Naive thymus-derived CD4-positive, alpha-beta T cell (primary cell): ENCODE measurements at regions of chr5 and their contacts with region 1.

Region 1: DNA sequence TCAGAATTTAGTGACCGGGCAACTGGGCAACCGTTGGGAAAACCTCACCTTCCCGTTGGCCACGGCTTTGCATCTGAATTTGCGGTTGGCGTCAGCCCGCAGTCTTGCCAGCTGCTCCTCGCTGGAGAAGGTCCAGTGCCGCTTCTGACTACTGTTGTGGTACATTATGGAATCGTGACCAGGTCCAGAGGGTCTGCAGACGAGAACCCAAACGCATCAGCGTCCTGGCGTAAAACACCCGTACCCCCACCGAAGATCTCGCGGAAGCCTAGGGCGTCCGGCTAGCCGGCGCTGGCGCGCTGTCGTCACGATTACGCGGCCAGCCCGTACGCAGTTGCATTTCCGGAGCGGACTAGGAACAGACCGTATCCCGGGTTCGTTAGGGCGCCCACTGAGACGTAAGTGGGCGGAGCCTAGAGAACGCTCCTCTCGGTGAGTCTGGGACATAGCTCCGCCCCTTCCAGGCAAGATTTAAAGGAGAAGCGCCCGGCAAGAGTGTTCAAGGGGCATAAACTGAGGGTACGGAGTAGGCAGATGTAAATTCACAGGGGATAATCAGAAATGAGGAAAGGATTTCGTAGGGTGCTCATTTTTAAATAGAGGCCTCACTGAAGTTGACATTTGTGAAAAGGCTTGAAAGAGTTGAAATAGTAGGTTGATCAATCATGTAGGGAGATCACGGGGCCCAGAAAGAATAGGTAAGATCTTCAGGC is at the start of gene CCNH:
- DNase-seq: peak; percentile 83 to 98 (median 97)
- ATAC-seq: peak; percentile 99
- H3K4me3 ChIP-seq: peak within 1 kb of the TSS; percentile 88
- H3K4me3 Mint-ChIP-seq: peak within 1 kb of the TSS; percentile 90 to 100 (median 95)
- H3K27ac ChIP-seq: peak within 1 kb of the TSS; percentile 99
- H3K27ac Mint-ChIP-seq: peak within 1 kb of the TSS; percentile 92 to 99 (median 98)
- H3K4me1 ChIP-seq: peaks cover 26 to 28% of the 10 kb centered on the region in 2 donors
- H3K4me1 Mint-ChIP-seq: peaks cover 24 to 62% (median 50%) of the 10 kb centered on the region in 7 donors
- H3K27me3 ChIP-seq: no peaks in the 10 kb centered on the region
- H3K27me3 Mint-ChIP-seq: peaks cover 0 to 3% (median 0%) of the 10 kb centered on the region in 5 donors
- total RNA-seq, gene CCNH: 57.5 to 239 (median 113) TPM

Region 2: DNA sequence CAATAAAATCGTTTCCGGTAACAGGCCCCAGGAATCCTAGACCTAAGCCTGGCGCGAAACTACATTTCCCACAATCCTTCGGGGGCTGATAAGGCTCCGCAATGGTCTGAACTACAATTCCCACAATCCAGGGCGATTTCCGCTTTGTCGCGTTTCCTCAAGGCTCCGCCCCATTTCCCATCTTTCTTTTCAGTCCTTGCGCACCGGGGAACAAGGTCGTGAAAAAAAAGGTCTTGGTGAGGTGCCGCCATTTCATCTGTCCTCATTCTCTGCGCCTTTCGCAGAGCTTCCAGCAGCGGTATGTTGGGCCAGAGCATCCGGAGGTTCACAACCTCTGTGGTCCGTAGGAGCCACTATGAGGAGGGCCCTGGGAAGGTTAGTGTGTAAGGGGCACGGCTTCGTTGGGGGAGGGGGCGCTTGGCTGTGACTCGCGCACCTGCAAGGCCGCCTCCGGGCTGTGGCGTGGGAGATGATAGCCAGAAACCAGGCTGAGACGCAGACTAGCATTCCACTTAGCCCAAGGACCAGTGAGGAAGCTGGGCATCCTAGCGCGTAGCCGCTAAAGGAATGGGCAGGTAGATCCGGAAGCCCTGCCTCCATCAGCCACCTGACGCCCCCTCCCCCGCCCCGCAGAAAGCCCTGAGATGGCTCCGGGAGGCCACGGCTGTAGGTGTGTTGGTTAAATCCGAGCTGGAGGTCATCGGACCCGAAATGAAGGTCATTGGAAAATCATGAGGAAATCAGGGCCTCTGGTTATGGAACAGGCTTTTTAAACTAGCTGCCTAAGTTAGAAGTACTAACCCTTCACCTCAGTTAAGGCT is 794.8 kb before region 1 on chr5 and contains the start of gene COX7C:
- CTCF ChIA-PET with region 1: no interaction called
- POLR2A ChIA-PET with region 1: interaction called, 8 read pairs
- intact Hi-C with region 1: loop called (anchors 1 kb)
- DNase-seq: peak; percentile 67 to 97 (median 96)
- ATAC-seq: peak; percentile 97
- H3K4me3 ChIP-seq: peak within 1 kb of the TSS; percentile 95
- H3K4me3 Mint-ChIP-seq: peak within 1 kb of the TSS; percentile 96 to 100 (median 100)
- H3K27ac ChIP-seq: peak within 1 kb of the TSS; percentile 96
- H3K27ac Mint-ChIP-seq: peak within 1 kb of the TSS; percentile 98 to 100 (median 100)
- H3K4me1 ChIP-seq: peaks cover 7 to 12% of the 10 kb centered on the region in 2 donors
- H3K4me1 Mint-ChIP-seq: peaks cover 5 to 46% (median 32%) of the 10 kb centered on the region in 7 donors
- H3K27me3 ChIP-seq: no peaks in the 10 kb centered on the region
- H3K27me3 Mint-ChIP-seq: peaks cover 8 to 14% (median 9%) of the 10 kb centered on the region in 5 donors
- total RNA-seq, gene COX7C: 393 to 571 (median 547) TPM

Region 3: DNA sequence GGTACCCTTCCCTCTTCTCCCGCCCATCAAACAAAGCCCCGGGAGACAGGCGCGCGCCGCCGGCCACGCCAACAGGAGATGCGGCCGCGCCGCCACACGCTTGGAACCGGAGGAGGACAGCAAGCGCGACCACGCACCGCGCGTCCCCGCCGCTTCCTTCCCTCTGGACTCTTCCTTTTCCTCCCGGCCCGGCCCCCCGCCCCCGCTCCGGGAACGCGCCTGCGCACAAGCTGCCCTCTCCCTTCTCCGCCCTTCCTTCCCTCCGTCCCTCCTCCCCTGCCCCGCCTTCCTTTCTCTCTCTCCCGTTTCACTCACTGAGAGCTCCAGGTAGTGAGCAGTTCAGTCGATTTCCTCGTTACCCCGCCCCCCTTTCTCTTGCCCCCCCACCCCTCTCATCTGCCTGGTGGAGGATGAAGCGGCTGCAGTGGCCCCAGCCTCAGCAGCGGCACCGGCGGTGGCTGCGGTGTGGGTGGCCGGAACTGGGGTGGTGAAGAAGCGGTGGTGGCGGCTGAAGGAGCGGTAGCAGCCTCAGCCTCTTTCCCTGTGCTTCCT is 145.1 kb before region 1 on chr5 and contains the start of gene RASA1:
- CTCF ChIA-PET with region 1: interaction called, 7 read pairs
- POLR2A ChIA-PET with region 1: interaction called, 8 read pairs
- intact Hi-C with region 1: loop called (anchors 1 kb)
- DNase-seq: peak in 3 of 9 donors; percentile 51 to 90 (median 76)
- ATAC-seq: peak; percentile 75
- H3K4me3 ChIP-seq: peak within 1 kb of the TSS; percentile 95
- H3K4me3 Mint-ChIP-seq: peak within 1 kb of the TSS; percentile 86 to 100 (median 98)
- H3K27ac ChIP-seq: peak within 1 kb of the TSS; percentile 81
- H3K27ac Mint-ChIP-seq: peak within 1 kb of the TSS; percentile 84 to 96 (median 91)
- H3K4me1 ChIP-seq: peaks cover 13 to 14% of the 10 kb centered on the region in 2 donors
- H3K4me1 Mint-ChIP-seq: peaks cover 11 to 47% (median 35%) of the 10 kb centered on the region in 7 donors
- H3K27me3 ChIP-seq: no peaks in the 10 kb centered on the region
- H3K27me3 Mint-ChIP-seq: peaks cover 0 to 7% (median 0%) of the 10 kb centered on the region in 5 donors
- total RNA-seq, gene RASA1: 20.9 to 30.7 (median 27.5) TPM

Region 4: GRCh38 chr5:87400305-87400899 is 12.4 kb before region 1 on chr5:
- CTCF ChIA-PET with region 1: interaction called, 4 read pairs
- POLR2A ChIA-PET with region 1: interaction called, 12 read pairs
- intact Hi-C with region 1: loop called (anchors 1 kb)
- DNase-seq: peak in 6 of 9 donors; percentile 30 to 66 (median 52)
- ATAC-seq: peak; percentile 87
- H3K4me3 ChIP-seq: no peak overlapping the region
- H3K4me3 Mint-ChIP-seq: peak overlapping the region in 1 of 10 donors; percentile 34
- H3K27ac ChIP-seq: peak overlapping the region; percentile 43
- H3K27ac Mint-ChIP-seq: peak overlapping the region in 7 of 9 donors; percentile 17 to 75 (median 69)
- H3K4me1 ChIP-seq: peaks cover 11 to 15% of the 10 kb centered on the region in 2 donors
- H3K4me1 Mint-ChIP-seq: peaks cover 13 to 48% (median 28%) of the 10 kb centered on the region in 7 donors
- H3K27me3 ChIP-seq: no peaks in the 10 kb centered on the region
- H3K27me3 Mint-ChIP-seq: no peaks in the 10 kb centered on the region

Region 5: GRCh38 chr5:87435144-87435694 is 22.4 kb after region 1 on chr5:
- CTCF ChIA-PET with region 1: no interaction called
- POLR2A ChIA-PET with region 1: no interaction called
- intact Hi-C with region 1: no loop called
- DNase-seq: no peak
- ATAC-seq: no peak
- H3K4me3 ChIP-seq: no peak overlapping the region
- H3K4me3 Mint-ChIP-seq: no peak overlapping the region
- H3K27ac ChIP-seq: no peak overlapping the region
- H3K27ac Mint-ChIP-seq: no peak overlapping the region
- H3K4me1 ChIP-seq: no peaks in the 10 kb centered on the region
- H3K4me1 Mint-ChIP-seq: no peaks in the 10 kb centered on the region
- H3K27me3 ChIP-seq: peaks cover 0 to 2% of the 10 kb centered on the region in 2 donors
- H3K27me3 Mint-ChIP-seq: peaks cover 2 to 18% (median 14%) of the 10 kb centered on the region in 5 donors

Region 6: GRCh38 chr5:87452837-87453236 is 40.1 kb after region 1 on chr5:
- CTCF ChIA-PET with region 1: no interaction called
- POLR2A ChIA-PET with region 1: no interaction called
- intact Hi-C with region 1: no loop called
- DNase-seq: peak in 1 of 9 donors; percentile 1
- ATAC-seq: no peak
- H3K4me3 ChIP-seq: no peak overlapping the region
- H3K4me3 Mint-ChIP-seq: no peak overlapping the region
- H3K27ac ChIP-seq: no peak overlapping the region
- H3K27ac Mint-ChIP-seq: no peak overlapping the region
- H3K4me1 ChIP-seq: no peaks in the 10 kb centered on the region
- H3K4me1 Mint-ChIP-seq: peaks cover 0 to 9% (median 0%) of the 10 kb centered on the region in 7 donors
- H3K27me3 ChIP-seq: no peaks in the 10 kb centered on the region
- H3K27me3 Mint-ChIP-seq: peaks cover 15 to 33% (median 25%) of the 10 kb centered on the region in 5 donors

Region 7: DNA sequence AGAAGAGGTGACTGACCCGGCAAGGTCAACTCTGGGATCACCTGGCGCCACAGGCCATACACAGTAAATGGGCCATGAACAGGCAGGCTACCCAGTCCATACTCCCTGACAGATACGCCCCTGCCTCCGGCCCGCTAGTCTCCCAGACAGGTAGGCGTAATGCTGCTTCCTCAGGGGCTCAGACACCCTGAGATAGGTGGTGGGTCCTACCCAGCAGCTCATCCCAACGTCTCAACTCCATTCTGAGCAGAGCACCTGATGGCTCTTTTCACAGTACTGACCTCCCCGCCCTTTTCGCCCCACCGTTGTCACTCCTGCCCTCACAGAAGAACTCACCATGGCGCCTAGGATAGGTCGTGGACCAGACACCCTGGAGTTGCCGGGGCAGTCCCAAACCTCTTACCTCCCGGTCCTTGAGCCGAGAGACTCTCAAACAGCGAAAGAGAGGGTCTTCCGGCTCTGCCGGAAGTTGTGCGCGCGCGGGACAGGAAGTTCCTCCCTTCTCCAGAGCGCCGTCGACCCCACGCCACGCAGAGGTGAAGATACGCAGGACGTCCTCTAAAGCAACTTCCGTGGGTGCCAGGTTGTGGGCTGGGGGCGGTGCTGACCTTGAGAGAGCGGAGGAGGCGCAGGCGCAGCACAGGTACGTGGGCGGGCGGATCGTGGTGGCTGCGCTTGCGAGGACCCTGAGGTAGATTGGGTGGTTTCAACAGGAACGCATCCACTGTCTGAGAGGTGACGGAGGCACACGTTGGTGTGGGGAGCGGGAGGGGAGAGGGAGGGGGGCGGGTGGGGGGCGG is 855.8 kb after region 1 on chr5 and contains the start of gene TMEM161B:
- CTCF ChIA-PET with region 1: no interaction called
- POLR2A ChIA-PET with region 1: no interaction called
- intact Hi-C with region 1: loop called (anchors 1 to 2 kb)
- DNase-seq: peak; percentile 81 to 97 (median 95)
- ATAC-seq: peak; percentile 98
- H3K4me3 ChIP-seq: peak within 1 kb of the TSS; percentile 99
- H3K4me3 Mint-ChIP-seq: peak within 1 kb of the TSS; percentile 99 to 100 (median 99)
- H3K27ac ChIP-seq: peak within 1 kb of the TSS; percentile 97
- H3K27ac Mint-ChIP-seq: peak within 1 kb of the TSS; percentile 94 to 100 (median 97)
- H3K4me1 ChIP-seq: peaks cover 11 to 21% of the 10 kb centered on the region in 2 donors
- H3K4me1 Mint-ChIP-seq: peaks cover 24 to 81% (median 71%) of the 10 kb centered on the region in 7 donors
- H3K27me3 ChIP-seq: no peaks in the 10 kb centered on the region
- H3K27me3 Mint-ChIP-seq: no peaks in the 10 kb centered on the region
- total RNA-seq, gene TMEM161B: 21.1 to 39.7 (median 28.4) TPM

Region 8: DNA sequence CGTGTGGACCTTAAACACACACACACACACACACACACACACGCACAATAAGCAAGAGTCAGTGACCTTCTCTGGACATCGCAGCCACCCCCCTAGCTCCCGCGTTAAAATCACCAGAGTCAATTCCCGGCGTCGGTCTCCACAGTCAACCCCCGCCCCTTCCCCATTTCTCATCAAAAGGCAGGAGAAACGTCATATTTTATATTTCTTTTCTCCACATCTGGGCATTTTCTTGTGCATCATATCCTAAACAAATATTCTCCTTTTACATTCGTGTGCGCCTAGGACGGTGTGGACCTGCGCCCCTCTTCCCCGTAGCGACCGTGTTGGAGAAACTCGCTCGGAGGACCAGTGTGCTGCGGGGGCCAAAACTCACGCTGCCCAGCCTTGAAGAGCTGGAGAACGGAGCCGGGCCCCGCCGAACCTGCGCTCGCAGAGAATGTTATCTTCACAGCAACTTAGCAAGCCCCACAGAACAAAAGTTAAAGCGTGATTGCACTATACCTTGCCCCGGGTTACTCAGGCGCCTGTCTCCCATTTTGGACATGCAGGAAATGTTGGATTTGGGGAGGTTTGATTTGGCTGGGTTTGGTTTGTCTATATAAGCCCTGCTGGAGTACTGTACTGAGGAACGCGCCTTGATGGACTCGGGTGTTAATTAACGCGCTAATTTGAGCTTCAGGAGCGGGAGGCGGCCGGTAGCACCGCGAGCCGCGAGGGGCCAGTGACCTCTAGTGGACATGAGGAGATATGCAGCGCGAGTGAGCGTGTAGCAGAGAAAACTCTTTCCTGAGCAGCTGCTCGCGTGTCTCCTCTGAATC is 1277.8 kb after region 1 on chr5:
- CTCF ChIA-PET with region 1: no interaction called
- POLR2A ChIA-PET with region 1: no interaction called
- intact Hi-C with region 1: loop called in 1 of 2 experiments (anchors 5 kb)
- DNase-seq: peak in 8 of 9 donors; percentile 35 to 71 (median 66)
- ATAC-seq: peak; percentile 90
- H3K4me3 ChIP-seq: no peak overlapping the region
- H3K4me3 Mint-ChIP-seq: peak overlapping the region; percentile 61 to 81 (median 72)
- H3K27ac ChIP-seq: no peak overlapping the region
- H3K27ac Mint-ChIP-seq: peak overlapping the region in 7 of 9 donors; percentile 12 to 88 (median 39)
- H3K4me1 ChIP-seq: peaks cover 7 to 14% of the 10 kb centered on the region in 2 donors
- H3K4me1 Mint-ChIP-seq: peaks cover 11 to 32% (median 19%) of the 10 kb centered on the region in 7 donors
- H3K27me3 ChIP-seq: peaks cover 38 to 56% of the 10 kb centered on the region in 2 donors
- H3K27me3 Mint-ChIP-seq: peaks cover 87 to 93% (median 91%) of the 10 kb centered on the region in 5 donors

Region 9: GRCh38 chr5:88813805-88814575 is 1401.2 kb after region 1 on chr5:
- CTCF ChIA-PET with region 1: no interaction called
- POLR2A ChIA-PET with region 1: no interaction called
- intact Hi-C with region 1: no loop called
- DNase-seq: no peak
- ATAC-seq: no peak
- H3K4me3 ChIP-seq: no peak overlapping the region
- H3K4me3 Mint-ChIP-seq: no peak overlapping the region
- H3K27ac ChIP-seq: no peak overlapping the region
- H3K27ac Mint-ChIP-seq: no peak overlapping the region
- H3K4me1 ChIP-seq: no peaks in the 10 kb centered on the region
- H3K4me1 Mint-ChIP-seq: peaks cover 0 to 2% (median 0%) of the 10 kb centered on the region in 7 donors
- H3K27me3 ChIP-seq: no peaks in the 10 kb centered on the region
- H3K27me3 Mint-ChIP-seq: peaks cover 0 to 10% (median 5%) of the 10 kb centered on the region in 5 donors